Activated T-helper 2 cell treated with anti-CD3 and anti-CD28 coated beads, Interferon-gamma antibody, Interleukin-2, Interleukin-4, amounts not matched to agents 10 μg/mL and 5 μg/mL and 100 μg/mL, durations not matched to agents 14 hours and 24 hours and 36 hours (primary cell): ENCODE measurements at regions of chr10 and their contacts with region 1.

Region 1: DNA sequence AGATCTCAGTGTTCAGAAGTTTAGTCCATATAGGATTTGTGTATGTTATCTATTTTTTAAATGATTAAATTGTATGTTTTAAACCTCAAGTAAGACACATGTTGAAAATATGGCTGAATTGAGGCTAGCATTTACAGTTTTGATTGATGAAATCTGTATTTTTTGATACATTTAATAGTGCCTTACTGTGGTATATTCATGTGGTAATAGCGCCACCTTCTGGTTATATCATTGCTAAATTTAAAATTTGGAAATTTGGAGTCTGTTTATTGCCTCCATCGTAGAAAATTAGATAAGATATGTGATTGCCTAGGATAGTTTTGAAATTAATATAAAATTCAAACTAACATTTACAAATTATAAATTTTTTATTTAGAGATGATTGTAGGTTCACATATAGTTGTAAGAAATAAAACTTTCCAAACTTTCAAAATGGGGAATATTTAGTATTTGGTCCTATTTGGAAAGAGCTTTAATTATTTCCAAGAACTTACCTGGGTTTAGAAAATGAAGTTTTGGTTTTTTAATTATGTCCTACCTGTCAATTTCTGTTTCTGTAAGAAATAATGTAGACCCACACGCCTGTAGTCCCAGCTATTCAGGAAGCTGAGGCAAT is 19.1 kb upstream of the ARMS2 start:
- DNase-seq: no peak
- H3K4me3 Mint-ChIP-seq: no peak overlapping the region
- H3K27ac Mint-ChIP-seq: no peak overlapping the region
- H3K4me1 Mint-ChIP-seq: no peaks in the 10 kb centered on the region
- H3K27me3 Mint-ChIP-seq: peaks cover 3% of the 10 kb centered on the region

Region 2: DNA sequence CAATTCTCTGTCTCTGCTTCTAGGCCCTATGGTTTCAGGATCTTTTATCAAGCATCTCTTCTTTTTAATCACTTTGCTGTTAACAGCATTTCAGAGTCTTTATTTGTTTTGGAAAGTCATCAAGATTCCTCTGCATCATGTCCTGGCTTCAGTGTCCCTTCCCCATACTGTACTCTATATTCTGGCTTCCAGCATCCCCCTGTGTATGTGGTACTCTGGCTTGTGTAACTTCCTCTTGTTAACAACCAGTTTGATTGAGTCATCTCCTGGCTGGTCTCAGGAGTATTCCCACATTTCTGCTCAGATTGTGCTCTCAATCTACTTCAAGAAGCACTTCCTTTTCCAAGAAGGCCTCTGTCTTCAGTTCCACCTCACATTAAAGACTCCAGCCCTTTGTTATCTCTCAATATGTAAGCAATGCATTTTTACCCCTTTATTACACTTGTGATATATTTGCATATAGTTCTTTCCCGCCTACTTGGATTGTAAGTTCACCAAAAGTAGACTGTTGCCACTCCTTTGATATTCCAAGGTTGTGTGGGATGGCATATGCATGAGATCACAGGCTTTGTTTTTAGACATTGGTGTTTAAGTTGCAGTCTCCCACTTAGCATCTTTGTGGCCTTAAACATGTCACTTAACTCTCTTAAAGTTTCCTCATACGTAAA is 492.4 kb before region 1 on chr10:
- intact Hi-C with region 1: no loop called
- DNase-seq: no peak
- H3K4me3 Mint-ChIP-seq: no peak overlapping the region
- H3K27ac Mint-ChIP-seq: no peak overlapping the region
- H3K4me1 Mint-ChIP-seq: no peaks in the 10 kb centered on the region
- H3K27me3 Mint-ChIP-seq: peaks cover 6% of the 10 kb centered on the region

Region 3: GRCh38 chr10:122267849-122268737 is 167.2 kb before region 1 on chr10:
- intact Hi-C with region 1: loop called (anchors 1 kb)
- DNase-seq: peak; percentile 22
- H3K4me3 Mint-ChIP-seq: no peak overlapping the region
- H3K27ac Mint-ChIP-seq: no peak overlapping the region
- H3K4me1 Mint-ChIP-seq: no peaks in the 10 kb centered on the region
- H3K27me3 Mint-ChIP-seq: peaks cover 2% of the 10 kb centered on the region

Region 4: GRCh38 chr10:122298598-122299301 is 136.6 kb before region 1 on chr10:
- intact Hi-C with region 1: loop called (anchors 1 kb)
- DNase-seq: peak; percentile 34
- H3K4me3 Mint-ChIP-seq: no peak overlapping the region
- H3K27ac Mint-ChIP-seq: no peak overlapping the region
- H3K4me1 Mint-ChIP-seq: peaks cover 10% of the 10 kb centered on the region
- H3K27me3 Mint-ChIP-seq: peaks cover 6% of the 10 kb centered on the region

Region 5: DNA sequence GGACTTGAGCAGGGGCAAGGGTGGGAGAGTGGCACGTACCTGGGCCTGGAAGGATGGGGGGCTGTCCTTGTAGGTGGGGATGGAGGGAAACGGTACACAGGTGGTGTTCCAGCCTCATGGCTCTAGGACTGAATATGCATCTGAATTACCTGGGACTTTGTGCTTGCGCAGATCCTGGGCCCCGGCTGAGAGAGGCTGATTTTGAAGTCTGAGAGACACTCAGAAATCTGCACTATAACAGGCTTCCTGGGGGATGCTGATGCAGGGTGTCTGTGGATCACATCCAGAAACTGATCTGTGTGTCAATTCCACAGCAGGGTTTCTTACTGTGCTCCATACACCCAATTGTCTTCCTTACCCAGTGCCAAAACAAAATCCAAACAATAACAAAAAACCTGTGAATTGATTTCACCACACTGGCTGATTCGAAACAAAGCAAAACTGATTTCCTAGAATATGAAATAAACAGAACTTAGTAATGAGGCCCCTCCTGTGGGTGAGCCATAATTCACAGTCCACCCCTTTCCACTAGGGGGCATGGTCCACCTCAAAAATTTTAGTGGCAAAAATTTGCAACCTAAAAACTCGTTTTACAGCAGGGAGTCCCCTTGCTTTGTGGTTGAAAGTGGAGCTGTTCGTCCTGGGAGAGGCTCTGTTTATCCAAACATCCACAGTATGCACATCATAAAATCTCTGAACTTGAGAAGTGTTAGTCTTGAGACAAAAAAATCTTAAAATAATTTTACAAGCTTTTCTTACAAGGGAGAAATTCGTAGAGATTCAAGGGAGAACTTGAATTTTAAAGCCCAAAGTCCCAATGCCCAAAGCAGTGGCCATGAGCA is 92.8 kb before region 1 on chr10:
- intact Hi-C with region 1: loop called (anchors 1 kb)
- DNase-seq: no peak
- H3K4me3 Mint-ChIP-seq: no peak overlapping the region
- H3K27ac Mint-ChIP-seq: no peak overlapping the region
- H3K4me1 Mint-ChIP-seq: peaks cover 5% of the 10 kb centered on the region
- H3K27me3 Mint-ChIP-seq: peaks cover 5% of the 10 kb centered on the region

Region 6: DNA sequence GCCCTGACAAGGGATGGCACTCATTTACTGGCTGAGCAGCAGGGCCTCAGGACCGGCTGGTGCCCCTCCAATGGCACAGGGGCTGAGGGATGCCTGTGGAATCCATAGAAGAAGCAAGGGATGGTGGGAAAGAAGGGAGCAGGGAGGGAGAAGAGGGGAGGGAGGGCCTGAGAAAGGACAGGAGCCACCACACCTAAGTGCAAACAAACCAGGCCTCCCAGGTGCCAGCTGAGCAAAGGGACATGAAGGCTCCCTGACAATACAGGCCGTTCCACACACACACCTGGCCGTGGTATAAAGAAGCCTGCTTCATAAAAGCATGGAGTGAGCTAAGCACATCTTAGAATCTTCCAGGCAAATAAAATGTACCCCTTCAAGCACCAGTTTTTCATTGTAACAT is 1929.3 kb after region 1 on chr10:
- intact Hi-C with region 1: no loop called
- DNase-seq: no peak
- H3K4me3 Mint-ChIP-seq: no peak overlapping the region
- H3K27ac Mint-ChIP-seq: no peak overlapping the region
- H3K4me1 Mint-ChIP-seq: no peaks in the 10 kb centered on the region
- H3K27me3 Mint-ChIP-seq: no peaks in the 10 kb centered on the region